HepG2 (cell line): ENCODE measurements at regions of chr16 and their contacts with region 1.

Region 1: GRCh38 chr16:52611817-52612673 is 65.1 kb upstream of the TOX3 start:
- DNase-seq: peak; percentile 99
- ATAC-seq: peak; percentile 100
- H3K4me3 ChIP-seq: peak overlapping the region; percentile 57 to 73 (median 67)
- H3K27ac ChIP-seq: peak overlapping the region; percentile 89
- H3K4me1 ChIP-seq: peaks cover 41% of the 10 kb centered on the region
- H3K27me3 ChIP-seq: no peaks in the 10 kb centered on the region
- CTCF ChIP-seq: no peak
- EP300 ChIP-seq: peak; percentile 23 to 97; a peak in 2 of 4 replicates
- POLR2A ChIP-seq: peak; percentile 56 to 67
- RAD21 ChIP-seq: no peak

Region 2: GRCh38 chr16:52488837-52489289 is 123.2 kb before region 1 on chr16:
- CTCF ChIA-PET with region 1: no interaction called
- POLR2A ChIA-PET with region 1: interaction called, 12 read pairs
- in situ Hi-C with region 1: no loop called
- intact Hi-C with region 1: no loop called
- DNase-seq: peak; percentile 98
- ATAC-seq: peak; percentile 77
- H3K4me3 ChIP-seq: no peak overlapping the region; a peak in 1 of 6 replicates
- H3K27ac ChIP-seq: peak overlapping the region; percentile 78
- H3K4me1 ChIP-seq: peaks cover 78% of the 10 kb centered on the region
- H3K27me3 ChIP-seq: no peaks in the 10 kb centered on the region
- CTCF ChIP-seq: no peak
- EP300 ChIP-seq: peak in 1 of 2 experiments; percentile 96; a peak in 2 of 4 replicates
- POLR2A ChIP-seq: no peak
- RAD21 ChIP-seq: peak; percentile 56; the same call in 1 of the 2 replicates

Region 3: GRCh38 chr16:52573365-52574299 is 38.4 kb before region 1 on chr16:
- CTCF ChIA-PET with region 1: no interaction called
- POLR2A ChIA-PET with region 1: interaction called, 38 read pairs
- in situ Hi-C with region 1: no loop called
- intact Hi-C with region 1: no loop called
- DNase-seq: peak; percentile 95
- ATAC-seq: peak; percentile 95
- H3K4me3 ChIP-seq: peak overlapping the region in 2 of 3 experiments; percentile 11 to 36; a peak in 4 of 6 replicates
- H3K27ac ChIP-seq: peak overlapping the region; percentile 71
- H3K4me1 ChIP-seq: peaks cover 100% of the 10 kb centered on the region
- H3K27me3 ChIP-seq: no peaks in the 10 kb centered on the region
- CTCF ChIP-seq: no peak
- EP300 ChIP-seq: peak in 1 of 2 experiments; percentile 92; a peak in 2 of 4 replicates
- POLR2A ChIP-seq: peak in 1 of 2 experiments; percentile 48; a peak in 1 of 4 replicates
- RAD21 ChIP-seq: no peak

Region 4: DNA sequence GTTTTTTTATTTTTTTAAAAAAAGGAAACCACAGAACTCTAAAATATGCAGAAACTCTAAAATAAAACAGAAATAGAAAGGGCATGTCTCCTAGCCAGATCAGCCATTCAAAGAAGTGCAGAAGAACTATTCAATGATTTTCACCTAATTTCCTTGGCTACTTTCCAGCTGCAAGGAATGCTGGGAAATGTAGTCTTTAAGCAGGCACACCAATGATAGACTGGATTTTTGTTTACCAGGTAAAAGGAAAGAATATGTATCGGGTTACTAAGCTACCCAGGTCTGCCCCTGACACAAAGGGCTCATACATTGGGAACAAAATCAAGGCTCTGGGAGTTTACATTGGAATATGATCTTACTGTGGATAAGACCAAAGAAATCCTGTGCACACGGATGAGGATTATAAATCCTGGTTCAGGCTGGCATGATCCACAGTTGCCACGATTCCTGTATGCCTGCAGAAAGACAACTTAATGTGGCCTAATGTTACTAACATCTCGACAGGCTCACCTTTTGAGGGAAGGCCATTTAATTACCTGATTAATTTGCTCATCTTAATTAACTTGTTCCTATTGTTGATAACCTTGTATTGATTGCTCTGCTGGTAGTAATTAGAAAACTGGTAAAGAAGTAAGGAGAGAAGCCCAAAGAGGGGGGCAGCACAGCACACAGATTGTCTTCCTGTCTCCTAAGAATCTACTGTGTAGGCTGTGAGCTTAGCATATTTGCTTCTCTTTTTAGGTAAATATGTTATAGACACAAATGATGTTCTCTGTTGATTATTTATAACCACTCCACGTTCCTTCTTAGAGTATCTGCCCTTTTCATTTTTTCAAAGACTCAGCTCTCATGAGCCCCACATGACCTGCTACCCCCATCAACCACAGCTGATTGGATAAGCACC is 14.2 kb before region 1 on chr16:
- CTCF ChIA-PET with region 1: no interaction called
- POLR2A ChIA-PET with region 1: interaction called, 24 read pairs
- in situ Hi-C with region 1: no loop called
- intact Hi-C with region 1: loop called (anchors 1 kb)
- DNase-seq: peak; percentile 99
- ATAC-seq: peak; percentile 100
- H3K4me3 ChIP-seq: peak overlapping the region in 1 of 3 experiments; percentile 23; a peak in 1 of 6 replicates
- H3K27ac ChIP-seq: peak overlapping the region; percentile 42
- H3K4me1 ChIP-seq: peaks cover 52% of the 10 kb centered on the region
- H3K27me3 ChIP-seq: no peaks in the 10 kb centered on the region
- CTCF ChIP-seq: no peak
- EP300 ChIP-seq: peak in 1 of 2 experiments; percentile 81; a peak in 2 of 4 replicates
- POLR2A ChIP-seq: no peak
- RAD21 ChIP-seq: no peak

Region 5: GRCh38 chr16:52676959-52677358 is 64.9 kb after region 1 on chr16:
- CTCF ChIA-PET with region 1: no interaction called
- POLR2A ChIA-PET with region 1: no interaction called
- in situ Hi-C with region 1: no loop called
- intact Hi-C with region 1: no loop called
- DNase-seq: no peak
- ATAC-seq: no peak
- H3K4me3 ChIP-seq: no peak overlapping the region
- H3K27ac ChIP-seq: no peak overlapping the region
- H3K4me1 ChIP-seq: no peaks in the 10 kb centered on the region
- H3K27me3 ChIP-seq: no peaks in the 10 kb centered on the region
- CTCF ChIP-seq: no peak
- EP300 ChIP-seq: no peak
- POLR2A ChIP-seq: no peak
- RAD21 ChIP-seq: no peak